GM13976 (cell line): ENCODE measurements at regions of chr2 and their contacts with region 1.

Region 1: GRCh38 chr2:197804049-197804757 is at the start of gene PLCL1:
- DNase-seq: peak; percentile 93
- CTCF ChIP-seq: no peak

Region 2: GRCh38 chr2:198127627-198128026 is 323.4 kb after region 1 on chr2:
- in situ Hi-C with region 1: loop called (anchors 10 kb)
- DNase-seq: peak; percentile 30
- CTCF ChIP-seq: peak; percentile 64